ENCODE measurements at regions of chr12 and their contacts with region 1.

Region 1: GRCh38 chr12:31325877-31326631 is at the start of gene SINHCAF:
- DNase-seq: peak; percentile 98
- H3K4me3 Mint-ChIP-seq: peak within 1 kb of the TSS; percentile 98
- H3K27ac Mint-ChIP-seq: peak within 1 kb of the TSS; percentile 99
- H3K4me1 Mint-ChIP-seq: peaks cover 17% of the 10 kb centered on the region
- H3K27me3 Mint-ChIP-seq: peaks cover 7% of the 10 kb centered on the region
- total RNA-seq, gene SINHCAF: 223 and 231 TPM in 2 replicates

Region 2: GRCh38 chr12:30754709-30755394 is 571.2 kb before region 1 on chr12 and contains the start of gene CAPRIN2:
- intact Hi-C with region 1: loop called (anchors 10 kb)
- DNase-seq: peak; percentile 92
- H3K4me3 Mint-ChIP-seq: peak within 1 kb of the TSS; percentile 88
- H3K27ac Mint-ChIP-seq: peak within 1 kb of the TSS; percentile 18
- H3K4me1 Mint-ChIP-seq: peaks cover 33% of the 10 kb centered on the region
- H3K27me3 Mint-ChIP-seq: no peaks in the 10 kb centered on the region
- total RNA-seq, gene CAPRIN2: 13.5 and 14.2 TPM in 2 replicates

Region 3: GRCh38 chr12:31274520-31275300 is 51.3 kb before region 1 on chr12:
- intact Hi-C with region 1: loop called (anchors 5 kb)
- DNase-seq: no peak
- H3K4me3 Mint-ChIP-seq: no peak overlapping the region
- H3K27ac Mint-ChIP-seq: peak overlapping the region; percentile 25
- H3K4me1 Mint-ChIP-seq: no peaks in the 10 kb centered on the region
- H3K27me3 Mint-ChIP-seq: no peaks in the 10 kb centered on the region

Region 4: DNA sequence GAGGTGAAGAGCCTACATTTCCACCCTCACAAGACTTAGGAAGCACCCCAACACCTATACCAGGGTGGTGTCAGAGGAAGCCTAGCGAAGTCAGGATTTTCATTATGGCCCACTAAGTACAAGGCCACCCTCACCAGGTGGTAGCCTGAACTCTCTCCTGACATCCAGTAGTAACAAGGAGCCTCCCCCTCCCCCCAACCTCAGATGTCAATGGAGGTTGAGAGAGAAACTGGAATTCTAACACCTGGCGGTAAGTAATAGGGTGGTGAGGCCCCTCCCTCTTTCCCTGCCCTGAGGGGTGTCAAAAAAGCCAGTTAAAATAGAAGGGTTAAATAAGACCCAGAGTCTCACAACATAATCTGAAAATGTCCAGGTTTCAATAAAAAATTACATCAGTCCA is 37.7 kb before region 1 on chr12:
- intact Hi-C with region 1: loop called (anchors 5 kb)
- DNase-seq: no peak
- H3K4me3 Mint-ChIP-seq: no peak overlapping the region
- H3K27ac Mint-ChIP-seq: no peak overlapping the region
- H3K4me1 Mint-ChIP-seq: peaks cover 7% of the 10 kb centered on the region
- H3K27me3 Mint-ChIP-seq: no peaks in the 10 kb centered on the region

Region 5: DNA sequence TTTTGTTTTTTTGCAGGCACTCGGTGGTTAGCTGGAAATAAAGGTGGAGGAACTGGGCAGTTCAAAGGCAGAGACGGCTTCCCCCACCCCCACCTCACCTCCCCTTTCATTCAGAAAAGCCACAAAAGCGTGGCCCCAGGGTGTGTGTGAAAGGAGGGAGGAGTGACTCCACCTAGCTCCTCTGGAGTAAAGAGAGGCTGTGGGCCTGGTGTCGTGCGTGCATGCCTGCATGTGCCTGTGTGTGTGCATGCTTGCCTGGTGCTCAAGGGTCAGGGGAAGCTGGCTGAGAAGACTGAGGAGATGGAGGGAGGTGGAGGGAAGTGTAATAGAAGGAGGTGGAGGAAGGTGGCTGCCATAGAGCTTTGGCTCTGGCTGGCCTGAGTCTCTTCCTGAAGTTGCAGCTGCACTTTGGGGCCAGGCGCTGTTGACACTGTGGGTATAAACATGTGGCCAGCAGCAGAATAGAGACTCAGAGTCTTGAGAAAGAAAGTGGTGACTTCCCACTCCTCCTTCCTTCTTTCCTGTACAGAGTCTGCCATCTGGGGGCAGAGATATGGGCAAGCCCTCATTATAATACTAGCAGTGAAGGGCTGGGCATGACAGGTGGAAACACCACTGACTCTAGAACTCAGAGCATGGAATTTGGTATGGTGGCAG is 36.8 kb after region 1 on chr12:
- intact Hi-C with region 1: loop called (anchors 1 kb)
- DNase-seq: peak; percentile 32
- H3K4me3 Mint-ChIP-seq: peak overlapping the region; percentile 49
- H3K27ac Mint-ChIP-seq: peak overlapping the region; percentile 78
- H3K4me1 Mint-ChIP-seq: peaks cover 19% of the 10 kb centered on the region
- H3K27me3 Mint-ChIP-seq: no peaks in the 10 kb centered on the region

Region 6: DNA sequence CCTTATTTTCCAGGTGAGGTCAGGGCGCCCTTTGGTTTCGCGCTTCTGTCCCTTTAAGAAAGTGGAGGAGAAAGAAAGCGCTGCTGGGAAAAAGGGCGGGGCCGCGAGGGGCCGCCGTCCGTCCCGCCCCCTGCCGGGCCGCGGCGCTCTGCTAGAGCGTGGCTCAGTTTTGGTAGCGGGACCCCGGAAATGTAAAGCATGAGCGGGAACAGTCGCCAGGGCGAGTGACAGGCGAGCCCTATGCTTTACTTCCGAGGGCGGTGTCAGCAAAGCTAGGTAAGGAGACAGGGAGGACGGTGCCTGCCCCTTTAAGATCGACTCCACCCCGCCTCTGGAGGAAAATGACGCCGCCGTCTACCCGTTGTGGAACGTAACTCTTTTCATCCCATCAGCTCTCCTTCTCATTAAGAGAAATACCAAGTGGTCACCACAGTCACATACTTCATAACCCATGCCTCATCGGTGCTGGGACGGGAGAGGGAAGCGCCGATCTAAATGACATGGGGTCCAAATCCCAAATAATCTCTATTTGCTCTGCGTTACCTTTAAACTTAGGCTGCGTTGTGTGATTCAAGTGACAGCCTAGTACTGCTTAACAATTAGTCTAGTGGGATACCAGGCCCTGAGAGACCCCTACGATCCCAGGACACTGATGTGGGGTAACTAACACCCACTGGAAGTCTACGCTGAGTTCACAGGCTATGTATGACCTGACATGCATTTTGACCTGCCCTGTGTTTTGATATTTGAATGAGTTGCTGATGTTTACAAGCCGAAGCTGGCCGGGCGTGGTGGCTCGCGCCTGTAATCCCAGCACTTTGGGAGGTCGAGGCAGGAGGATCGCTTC is 333.3 kb after region 1 on chr12 and contains the start of gene ETFBKMT:
- intact Hi-C with region 1: loop called (anchors 2 kb)
- DNase-seq: peak; percentile 95
- H3K4me3 Mint-ChIP-seq: peak within 1 kb of the TSS; percentile 95
- H3K27ac Mint-ChIP-seq: peak within 1 kb of the TSS; percentile 97
- H3K4me1 Mint-ChIP-seq: peaks cover 5% of the 10 kb centered on the region
- H3K27me3 Mint-ChIP-seq: no peaks in the 10 kb centered on the region
- total RNA-seq, gene ETFBKMT: 0.37 and 0.39 TPM in 2 replicates

Region 7: GRCh38 chr12:31728917-31729640 is 403.0 kb after region 1 on chr12 and contains the start of gene AMN1:
- intact Hi-C with region 1: loop called (anchors 2 kb)
- DNase-seq: peak; percentile 100
- H3K4me3 Mint-ChIP-seq: peak within 1 kb of the TSS; percentile 98
- H3K27ac Mint-ChIP-seq: peak within 1 kb of the TSS; percentile 99
- H3K4me1 Mint-ChIP-seq: peaks cover 35% of the 10 kb centered on the region
- H3K27me3 Mint-ChIP-seq: no peaks in the 10 kb centered on the region
- total RNA-seq, gene AMN1: 1.8 and 2.8 TPM in 2 replicates

Measured in activated T-helper 2 cell treated with anti-CD3 and anti-CD28 coated beads, Interferon-gamma antibody, Interleukin-2, Interleukin-4, amounts not matched to agents 10 μg/mL and 5 μg/mL and 100 μg/mL, durations not matched to agents 14 hours and 24 hours and 36 hours (primary cell).